Caco-2 (cell line): ENCODE measurements at regions of chr3 and their contacts with region 1.

Region 1: GRCh38 chr3:126522363-126522788 is 1.6 kb upstream of the CHST13 start:
- DNase-seq: peak; percentile 59 to 72
- H3K4me3 ChIP-seq: no peak overlapping the region
- H3K4me3 Mint-ChIP-seq: peak overlapping the region; percentile 13
- H3K27ac Mint-ChIP-seq: no peak overlapping the region
- H3K4me1 ChIP-seq: peaks cover 46% of the 10 kb centered on the region
- H3K4me1 Mint-ChIP-seq: peaks cover 9% of the 10 kb centered on the region
- H3K27me3 ChIP-seq: no peaks in the 10 kb centered on the region
- H3K27me3 Mint-ChIP-seq: no peaks in the 10 kb centered on the region
- CTCF ChIP-seq: peak; percentile 78 to 84

Region 2: GRCh38 chr3:126375835-126376331 is 146.5 kb before region 1 on chr3:
- CTCF ChIA-PET with region 1: no interaction called
- POLR2A ChIA-PET with region 1: no interaction called
- intact Hi-C with region 1: no loop called
- DNase-seq: no peak
- H3K4me3 ChIP-seq: no peak overlapping the region
- H3K4me3 Mint-ChIP-seq: no peak overlapping the region
- H3K27ac Mint-ChIP-seq: no peak overlapping the region
- H3K4me1 ChIP-seq: no peaks in the 10 kb centered on the region
- H3K4me1 Mint-ChIP-seq: no peaks in the 10 kb centered on the region
- H3K27me3 ChIP-seq: no peaks in the 10 kb centered on the region
- H3K27me3 Mint-ChIP-seq: peaks cover 2% of the 10 kb centered on the region
- CTCF ChIP-seq: no peak

Region 3: GRCh38 chr3:126554560-126555542 is 32.5 kb after region 1 on chr3:
- CTCF ChIA-PET with region 1: interaction called, 3 read pairs
- POLR2A ChIA-PET with region 1: no interaction called
- intact Hi-C with region 1: loop called (anchors 1 kb)
- DNase-seq: peak; percentile 18 to 30
- H3K4me3 ChIP-seq: no peak overlapping the region
- H3K4me3 Mint-ChIP-seq: no peak overlapping the region
- H3K27ac Mint-ChIP-seq: no peak overlapping the region
- H3K4me1 ChIP-seq: no peaks in the 10 kb centered on the region
- H3K4me1 Mint-ChIP-seq: no peaks in the 10 kb centered on the region
- H3K27me3 ChIP-seq: no peaks in the 10 kb centered on the region
- H3K27me3 Mint-ChIP-seq: no peaks in the 10 kb centered on the region
- CTCF ChIP-seq: peak in 1 of 2 experiments; percentile 27

Region 4: GRCh38 chr3:126654571-126655383 is 132.4 kb after region 1 on chr3 and contains the start of gene TXNRD3:
- CTCF ChIA-PET with region 1: no interaction called
- POLR2A ChIA-PET with region 1: no interaction called
- intact Hi-C with region 1: loop called (anchors 10 kb)
- DNase-seq: peak; percentile 87 to 92
- H3K4me3 ChIP-seq: peak within 1 kb of the TSS; percentile 46
- H3K4me3 Mint-ChIP-seq: peak within 1 kb of the TSS; percentile 78
- H3K27ac Mint-ChIP-seq: no peak within 1 kb of the TSS
- H3K4me1 ChIP-seq: no peaks in the 10 kb centered on the region
- H3K4me1 Mint-ChIP-seq: no peaks in the 10 kb centered on the region
- H3K27me3 ChIP-seq: no peaks in the 10 kb centered on the region
- H3K27me3 Mint-ChIP-seq: peaks cover 3% of the 10 kb centered on the region
- CTCF ChIP-seq: no peak
- total RNA-seq, gene TXNRD3: 11.1 and 11.4 TPM in 2 replicates